ENCODE measurements at regions of chr2 and their contacts with region 1.

Region 1: DNA sequence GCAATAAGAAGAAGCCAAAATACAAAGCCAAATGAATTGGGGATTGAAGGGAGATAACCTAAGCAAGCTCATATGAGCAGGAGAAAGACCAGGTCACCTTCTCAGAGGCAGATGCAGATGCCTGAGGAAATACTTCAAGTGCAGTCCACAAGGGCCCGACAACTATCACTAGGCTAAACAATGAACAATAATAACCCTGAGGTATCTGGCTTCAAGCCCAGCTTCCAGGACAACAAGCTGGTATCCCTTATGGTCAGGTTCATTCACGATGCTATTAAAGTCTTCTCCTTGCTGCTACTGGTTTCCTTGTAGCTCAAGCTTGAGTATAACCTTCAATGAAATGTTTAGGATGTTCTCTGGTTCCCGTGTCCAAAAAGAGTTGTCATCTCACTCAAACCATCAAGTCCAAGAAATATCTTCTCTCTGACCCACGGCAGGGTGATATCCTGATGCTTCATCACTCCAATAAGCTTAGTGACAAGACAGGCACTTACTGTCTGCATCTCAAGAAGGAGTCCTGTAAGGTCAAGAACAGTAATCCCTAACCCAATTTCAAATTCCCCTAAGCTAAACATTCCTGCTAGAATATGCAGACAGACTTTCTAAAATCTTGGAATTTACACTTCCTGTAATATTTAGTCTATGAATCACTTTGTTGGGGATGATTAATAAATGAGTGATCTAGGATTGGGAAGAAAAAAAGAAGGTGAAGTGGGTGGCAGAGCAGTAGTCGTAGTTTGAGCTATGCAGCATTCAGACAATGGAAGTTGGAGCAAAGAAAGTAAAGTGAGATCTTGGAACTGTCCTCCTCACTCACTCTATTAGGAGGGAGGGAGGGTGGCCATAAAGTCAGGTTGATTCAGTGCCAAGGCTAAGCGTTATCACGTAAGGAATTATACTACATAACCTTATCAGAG is 33.1 kb downstream of the CHN1 start:
- DNase-seq: peak; percentile 68 to 75
- H3K4me3 ChIP-seq: no peak overlapping the region
- H3K27ac ChIP-seq: 0 out of 2 replicates have a peak overlapping the region, but pooled peaks have one; percentile 2
- H3K4me1 ChIP-seq: peaks cover 17% of the 10 kb centered on the region
- H3K27me3 ChIP-seq: no peaks in the 10 kb centered on the region
- CTCF ChIP-seq: no peak

Region 2: GRCh38 chr2:174827371-174828369 is 144.5 kb before region 1 on chr2:
- CTCF ChIA-PET with region 1: no interaction called
- POLR2A ChIA-PET with region 1: interaction called, 11 read pairs
- intact Hi-C with region 1: loop called (anchors 5 kb)
- DNase-seq: peak; percentile 62 to 91
- H3K4me3 ChIP-seq: peak overlapping the region; percentile 31; the same call in 1 of the 2 replicates
- H3K27ac ChIP-seq: peak overlapping the region; percentile 69
- H3K4me1 ChIP-seq: peaks cover 41% of the 10 kb centered on the region
- H3K27me3 ChIP-seq: no peaks in the 10 kb centered on the region
- CTCF ChIP-seq: no peak

Region 3: DNA sequence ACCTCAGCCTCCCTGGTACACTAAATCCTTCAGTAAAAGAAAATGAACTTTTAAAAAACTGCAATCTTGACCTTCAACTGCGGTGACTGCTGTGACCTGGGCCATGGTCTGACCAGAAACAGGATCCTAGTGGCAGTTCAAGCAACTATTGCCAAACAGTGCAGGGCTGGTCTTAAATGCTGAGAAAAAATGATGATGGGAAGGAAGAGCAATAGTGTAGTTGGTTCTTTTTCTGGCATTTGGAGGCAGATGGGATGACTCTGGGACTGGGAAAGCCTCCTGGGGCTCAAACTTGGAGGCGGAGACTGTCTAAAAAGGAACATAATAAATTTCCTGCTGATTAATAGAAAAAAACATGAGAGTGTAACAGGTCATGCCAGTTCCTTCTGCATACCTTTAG is 12.3 kb before region 1 on chr2:
- CTCF ChIA-PET with region 1: no interaction called
- POLR2A ChIA-PET with region 1: no interaction called
- intact Hi-C with region 1: loop called (anchors 2 kb)
- DNase-seq: no peak
- H3K4me3 ChIP-seq: no peak overlapping the region
- H3K27ac ChIP-seq: no peak overlapping the region
- H3K4me1 ChIP-seq: 0 out of 2 replicates have a peak, but pooled peaks cover 4% of the 10 kb centered on the region
- H3K27me3 ChIP-seq: no peaks in the 10 kb centered on the region
- CTCF ChIP-seq: no peak

Measured in PC-9 (cell line).